ENCODE measurements at regions of chr2 and their contacts with region 1.

Region 1: DNA sequence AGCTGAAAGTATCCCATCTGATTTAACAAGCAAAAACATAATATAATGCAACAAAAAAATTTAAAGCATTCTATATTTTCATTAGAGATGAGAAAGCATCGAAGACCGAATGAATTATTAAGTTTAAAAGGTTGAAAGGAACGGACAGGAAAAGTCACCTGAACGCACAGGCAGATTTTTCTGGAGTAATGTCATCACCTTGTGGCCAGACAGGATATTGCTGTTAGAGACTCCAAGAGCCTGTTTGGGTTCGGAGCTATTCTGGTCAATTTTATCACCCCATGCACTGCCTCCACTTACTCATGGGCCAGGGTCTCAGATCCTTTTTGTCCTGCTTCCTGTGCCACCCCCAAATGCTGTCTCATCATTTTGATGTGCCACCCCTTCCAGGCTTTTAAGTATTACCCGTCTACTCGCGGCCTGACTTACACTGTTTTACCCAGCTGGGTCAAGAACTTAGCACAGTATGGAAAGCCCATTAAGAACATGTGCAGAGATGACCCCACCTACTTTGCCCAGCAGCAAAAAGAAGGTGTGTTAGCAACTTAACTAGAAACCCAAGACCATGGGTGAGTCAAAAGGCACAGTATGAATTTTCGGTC is 27.3 kb downstream of the GKN2 start:
- DNase-seq: peak in 1 of 2 experiments; percentile 46
- H3K4me3 ChIP-seq: no peak overlapping the region
- H3K27ac ChIP-seq: no peak overlapping the region
- H3K4me1 ChIP-seq: no peaks in the 10 kb centered on the region
- H3K27me3 ChIP-seq: no peaks in the 10 kb centered on the region
- CTCF ChIP-seq: peak; percentile 91

Region 2: DNA sequence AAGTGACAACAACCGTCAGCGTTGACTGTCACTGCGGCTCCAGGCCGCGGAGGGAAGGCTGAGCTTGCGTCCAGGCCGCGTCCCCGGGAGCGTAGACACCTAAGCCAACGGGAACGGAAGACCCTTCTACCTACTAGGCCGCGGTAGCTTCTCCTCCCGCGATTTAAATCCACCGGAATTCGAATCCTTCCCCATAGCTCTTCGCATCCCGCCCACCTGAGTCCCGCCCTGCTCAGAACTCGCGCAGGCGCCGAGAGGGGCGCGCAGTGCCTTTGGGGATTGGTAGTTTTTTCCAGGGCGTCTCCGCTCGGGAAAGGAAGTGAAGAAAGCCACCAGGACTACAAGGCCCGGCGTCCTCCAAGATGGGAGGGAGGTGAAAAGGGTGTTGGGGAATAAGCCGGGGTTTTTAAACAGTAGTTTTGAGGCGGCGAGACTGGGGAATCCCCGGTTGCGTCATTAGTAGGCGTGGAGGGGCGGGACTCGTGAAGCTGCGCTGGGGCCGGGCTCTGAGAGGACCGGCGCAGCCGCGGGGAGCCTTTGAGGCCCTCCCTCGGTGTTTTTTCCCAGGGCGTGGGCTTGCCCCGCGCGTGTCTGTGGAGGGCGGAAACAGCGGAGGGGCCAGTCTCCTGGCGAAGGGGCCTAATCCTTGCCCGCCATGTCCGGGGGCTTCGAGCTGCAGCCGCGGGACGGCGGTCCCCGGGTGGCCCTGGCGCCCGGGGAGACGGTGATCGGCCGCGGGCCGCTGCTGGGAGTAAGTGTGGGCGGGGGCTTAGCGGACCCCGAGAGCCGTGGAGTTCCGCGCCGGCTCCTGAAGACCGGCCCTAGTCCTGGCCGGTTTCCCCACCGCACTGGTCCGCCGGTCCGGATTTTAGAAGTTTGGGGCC is 458.1 kb before region 1 on chr2 and contains the starts of genes APLF and FBXO48:
- CTCF ChIA-PET with region 1: interaction called, 11 read pairs
- POLR2A ChIA-PET with region 1: interaction called, 8 read pairs
- intact Hi-C with region 1: loop called (anchors 1 kb)
- DNase-seq: peak; percentile 98
- H3K4me3 ChIP-seq: peak within 1 kb of the TSS; percentile 76
- H3K27ac ChIP-seq: peak within 1 kb of the TSS; percentile 48
- H3K4me1 ChIP-seq: peaks cover 17% of the 10 kb centered on the region
- H3K27me3 ChIP-seq: no peaks in the 10 kb centered on the region
- CTCF ChIP-seq: no peak
- total RNA-seq, gene APLF: 3.9 and 4.5 TPM in 2 replicates
- total RNA-seq, gene FBXO48: 1.2 and 1.6 TPM in 2 replicates

Region 3: DNA sequence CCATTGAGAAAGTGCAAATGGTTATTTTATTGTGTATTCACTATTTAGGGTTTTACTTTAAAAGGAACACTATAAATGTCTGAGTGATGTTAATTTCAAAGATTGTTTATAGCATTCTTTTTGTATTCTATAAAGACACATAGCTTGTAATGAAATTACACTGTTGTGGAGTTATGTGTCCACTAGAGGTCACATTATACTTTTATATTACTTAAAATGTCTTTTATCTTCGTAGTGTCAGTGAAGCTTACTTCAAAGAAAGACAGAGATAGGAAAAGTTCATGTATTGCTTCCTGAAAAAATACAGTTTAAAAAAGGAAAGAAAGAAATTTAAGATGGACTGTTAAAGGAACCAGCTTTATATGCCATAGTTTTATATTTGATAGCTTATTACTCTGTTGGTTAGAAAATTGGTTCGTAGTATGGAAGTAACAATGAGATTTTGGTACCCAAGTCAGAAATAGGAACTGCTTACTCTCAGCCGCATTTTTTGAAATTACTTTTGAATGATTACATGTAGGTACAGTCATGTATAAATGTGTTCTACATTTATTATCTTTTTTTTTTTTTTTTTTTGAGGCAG is 437.5 kb before region 1 on chr2:
- CTCF ChIA-PET with region 1: interaction called, 11 read pairs
- POLR2A ChIA-PET with region 1: no interaction called
- intact Hi-C with region 1: no loop called
- DNase-seq: no peak
- H3K4me3 ChIP-seq: no peak overlapping the region
- H3K27ac ChIP-seq: no peak overlapping the region
- H3K4me1 ChIP-seq: 0 out of 2 replicates have a peak, but pooled peaks cover 4% of the 10 kb centered on the region
- H3K27me3 ChIP-seq: no peaks in the 10 kb centered on the region
- CTCF ChIP-seq: peak; percentile 77

Region 4: GRCh38 chr2:68709421-68709911 is 215.9 kb before region 1 on chr2:
- CTCF ChIA-PET with region 1: interaction called, 19 read pairs
- POLR2A ChIA-PET with region 1: no interaction called
- intact Hi-C with region 1: loop called (anchors 1 kb)
- DNase-seq: peak in 1 of 2 experiments; percentile 16
- H3K4me3 ChIP-seq: no peak overlapping the region
- H3K27ac ChIP-seq: no peak overlapping the region
- H3K4me1 ChIP-seq: no peaks in the 10 kb centered on the region
- H3K27me3 ChIP-seq: no peaks in the 10 kb centered on the region
- CTCF ChIP-seq: peak; percentile 74

Region 5: DNA sequence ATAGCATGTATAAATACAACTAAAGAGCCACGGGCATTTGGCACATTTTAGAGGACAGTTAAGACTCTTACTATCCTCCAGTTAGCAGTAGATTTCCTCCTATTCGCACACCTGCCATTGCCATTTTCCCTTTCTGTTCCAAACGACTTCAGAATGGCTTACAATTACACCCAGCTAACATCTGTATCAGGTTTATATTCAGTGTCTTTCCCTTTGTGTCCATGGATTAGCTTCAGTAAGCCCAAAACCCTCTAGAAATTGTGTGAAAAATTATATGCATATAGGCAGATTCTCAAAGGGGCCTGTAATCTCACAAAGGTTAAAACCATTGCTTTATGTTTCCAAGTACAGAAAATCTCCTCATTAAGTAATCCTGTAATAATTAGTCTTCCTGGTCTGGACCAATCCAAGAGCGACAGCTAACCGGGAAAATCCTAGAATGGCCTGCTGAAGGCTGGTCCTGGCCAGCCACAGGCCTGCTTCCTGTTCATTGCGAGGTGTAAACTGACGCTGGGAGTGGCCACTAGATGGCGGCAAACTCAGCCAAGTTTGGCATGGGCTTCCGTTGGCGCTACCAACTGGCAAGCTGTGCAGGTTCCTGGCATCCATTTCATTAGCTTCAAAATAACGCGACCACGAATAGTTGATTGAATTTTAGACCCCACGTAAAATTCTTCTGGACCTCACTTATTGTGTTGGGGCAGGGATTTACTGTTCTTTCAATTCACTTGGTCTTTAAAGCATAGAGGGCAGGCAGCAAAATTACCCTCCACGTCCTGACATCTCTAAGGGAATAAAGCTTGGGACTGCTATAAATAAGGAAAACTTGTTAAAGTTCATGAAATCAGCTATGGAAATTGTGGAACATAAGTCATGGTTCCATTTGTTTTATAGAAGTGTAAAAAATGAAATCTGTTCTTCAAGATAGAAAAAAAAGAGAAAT is 173.7 kb before region 1 on chr2:
- CTCF ChIA-PET with region 1: interaction called, 12 read pairs
- POLR2A ChIA-PET with region 1: no interaction called
- intact Hi-C with region 1: loop called (anchors 1 kb)
- DNase-seq: peak; percentile 59 to 79
- H3K4me3 ChIP-seq: no peak overlapping the region
- H3K27ac ChIP-seq: no peak overlapping the region
- H3K4me1 ChIP-seq: no peaks in the 10 kb centered on the region
- H3K27me3 ChIP-seq: no peaks in the 10 kb centered on the region
- CTCF ChIP-seq: peak; percentile 85

Region 6: GRCh38 chr2:68839260-68839833 is 86.0 kb before region 1 on chr2:
- CTCF ChIA-PET with region 1: no interaction called
- POLR2A ChIA-PET with region 1: no interaction called
- intact Hi-C with region 1: loop called (anchors 1 kb)
- DNase-seq: peak in 1 of 2 experiments; percentile 10
- H3K4me3 ChIP-seq: no peak overlapping the region
- H3K27ac ChIP-seq: no peak overlapping the region
- H3K4me1 ChIP-seq: no peaks in the 10 kb centered on the region
- H3K27me3 ChIP-seq: no peaks in the 10 kb centered on the region
- CTCF ChIP-seq: peak; percentile 60

Measured in PC-9 (cell line).